H1 (cell line): ENCODE measurements at regions of chr17 and their contacts with region 1.

Region 1: DNA sequence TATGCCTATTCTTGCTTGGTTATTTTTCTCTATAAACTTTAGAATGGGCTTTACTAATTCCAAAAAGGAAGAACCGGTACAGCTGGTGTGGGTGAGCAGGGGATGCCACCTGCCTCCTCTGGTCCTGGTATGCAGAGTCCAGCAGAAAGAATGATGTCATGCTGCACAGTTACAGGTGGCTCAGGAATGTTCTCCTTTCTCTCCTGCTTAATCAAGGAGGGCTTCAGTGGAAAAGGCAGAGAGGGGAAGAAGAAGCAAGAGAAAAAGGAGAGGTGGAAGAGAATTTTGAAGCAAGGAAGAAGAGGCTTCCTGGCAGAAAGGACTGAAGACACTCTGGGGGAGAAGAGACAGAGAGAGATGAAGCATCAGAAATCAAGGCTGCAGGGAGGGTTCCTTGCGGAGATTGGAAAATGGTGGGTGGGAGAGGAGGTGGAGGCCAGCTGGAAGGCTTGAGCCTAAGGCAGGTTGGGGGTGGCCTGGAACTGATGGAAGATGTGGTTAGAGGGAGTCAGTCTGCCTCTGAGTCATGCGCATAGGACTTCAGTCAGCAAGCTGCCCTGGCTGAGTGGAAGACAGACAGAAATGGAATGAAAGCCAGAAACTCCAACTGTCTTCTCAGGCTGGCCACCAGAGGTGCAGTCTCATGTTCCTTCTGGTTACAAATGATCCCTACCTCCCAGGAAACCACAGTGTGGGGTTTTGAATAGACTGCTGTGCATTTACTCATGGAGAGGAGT is 64.6 kb upstream of the CRHR1 start:
- DNase-seq: no peak
- H3K4me3 ChIP-seq: no peak overlapping the region
- H3K27ac ChIP-seq: no peak overlapping the region
- H3K4me1 ChIP-seq: peaks cover 0 to 5% (median 1%) of the 10 kb centered on the region in 4 experiments; a peak in 1 of 7 replicates
- H3K27me3 ChIP-seq: no peaks in the 10 kb centered on the region
- CTCF ChIP-seq: peak; percentile 29 to 69 (median 54)
- EP300 ChIP-seq: no peak
- POLR2A ChIP-seq: no peak
- RAD21 ChIP-seq: peak; percentile 26 to 46; a peak in 3 of 4 replicates

Region 2: GRCh38 chr17:45666046-45666600 is 53.4 kb before region 1 on chr17:
- CTCF ChIA-PET with region 1: interaction called, 22 read pairs
- POLR2A ChIA-PET with region 1: no interaction called
- DNase-seq: no peak
- H3K4me3 ChIP-seq: no peak overlapping the region
- H3K27ac ChIP-seq: no peak overlapping the region
- H3K4me1 ChIP-seq: no peaks in the 10 kb centered on the region
- H3K27me3 ChIP-seq: no peaks in the 10 kb centered on the region; a peak in 3 of 7 replicates
- CTCF ChIP-seq: peak; percentile 54 to 65 (median 54)
- EP300 ChIP-seq: no peak
- POLR2A ChIP-seq: no peak
- RAD21 ChIP-seq: peak; percentile 78

Region 3: DNA sequence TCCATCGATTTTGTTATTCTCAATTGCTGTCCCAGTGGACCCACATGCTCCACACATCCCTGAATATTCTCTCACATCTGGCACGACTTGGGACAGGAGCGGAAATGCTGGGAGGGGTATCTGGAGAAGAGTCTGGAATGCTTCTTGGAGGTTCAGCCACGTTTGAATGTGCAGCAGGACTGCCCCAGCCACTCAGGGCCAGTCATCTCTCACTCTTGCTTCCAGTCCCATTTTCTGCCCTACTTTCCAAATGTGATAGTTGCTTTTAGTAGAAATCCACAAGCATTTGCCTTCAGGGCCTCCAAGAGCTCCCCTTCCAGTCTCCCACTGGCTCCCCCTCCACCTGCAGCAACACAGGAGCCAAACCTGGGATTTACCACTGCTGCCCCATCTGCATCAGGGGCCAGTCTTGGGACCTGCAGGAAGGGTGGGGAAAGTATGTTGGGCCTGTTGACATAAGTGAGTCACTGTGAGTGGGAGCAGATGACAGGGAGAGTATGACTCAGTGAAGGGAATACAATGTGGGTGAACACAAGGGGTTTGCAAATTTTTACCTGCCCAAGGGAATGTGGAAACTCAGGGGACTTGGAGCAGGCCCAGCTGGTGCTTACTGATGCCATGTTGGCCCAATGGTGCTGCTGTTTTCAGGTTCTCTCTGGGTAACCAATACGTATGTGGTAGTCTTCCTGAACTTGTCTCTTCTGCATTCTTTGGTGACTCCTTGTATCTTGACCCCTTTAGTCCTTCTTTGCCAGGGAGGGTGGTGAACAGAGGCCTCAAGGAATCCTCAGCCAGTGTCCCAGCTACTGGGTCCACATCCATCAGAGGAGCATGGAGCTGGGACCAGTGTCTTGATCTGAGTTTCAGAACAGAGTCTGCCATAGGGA is 14.1 kb before region 1 on chr17:
- CTCF ChIA-PET with region 1: interaction called, 35 read pairs
- POLR2A ChIA-PET with region 1: no interaction called
- DNase-seq: no peak
- H3K4me3 ChIP-seq: no peak overlapping the region
- H3K27ac ChIP-seq: no peak overlapping the region
- H3K4me1 ChIP-seq: peaks cover 0 to 18% (median 8%) of the 10 kb centered on the region in 4 experiments; a peak in 6 of 7 replicates
- H3K27me3 ChIP-seq: peaks cover 0 to 2% (median 0%) of the 10 kb centered on the region in 4 experiments; a peak in 2 of 7 replicates
- CTCF ChIP-seq: no peak
- EP300 ChIP-seq: no peak
- POLR2A ChIP-seq: no peak
- RAD21 ChIP-seq: no peak

Region 4: GRCh38 chr17:45768000-45768399 is 48.5 kb after region 1 on chr17:
- CTCF ChIA-PET with region 1: interaction called, 26 read pairs
- POLR2A ChIA-PET with region 1: no interaction called
- DNase-seq: no peak
- H3K4me3 ChIP-seq: no peak overlapping the region
- H3K27ac ChIP-seq: no peak overlapping the region
- H3K4me1 ChIP-seq: peaks cover 9 to 17% (median 13%) of the 10 kb centered on the region in 4 experiments
- H3K27me3 ChIP-seq: no peaks in the 10 kb centered on the region
- CTCF ChIP-seq: peak; percentile 40 to 54 (median 41)
- EP300 ChIP-seq: no peak
- POLR2A ChIP-seq: no peak
- RAD21 ChIP-seq: peak; percentile 30 to 50; a peak in 3 of 4 replicates

Region 5: GRCh38 chr17:45828628-45829027 is 109.1 kb after region 1 on chr17:
- CTCF ChIA-PET with region 1: interaction called, 37 read pairs
- POLR2A ChIA-PET with region 1: no interaction called
- DNase-seq: no peak
- H3K4me3 ChIP-seq: no peak overlapping the region
- H3K27ac ChIP-seq: no peak overlapping the region
- H3K4me1 ChIP-seq: peaks cover 0 to 2% (median 0%) of the 10 kb centered on the region in 4 experiments; a peak in 1 of 7 replicates
- H3K27me3 ChIP-seq: no peaks in the 10 kb centered on the region; a peak in 1 of 7 replicates
- CTCF ChIP-seq: no peak
- EP300 ChIP-seq: no peak
- POLR2A ChIP-seq: no peak
- RAD21 ChIP-seq: peak in 1 of 2 experiments; percentile 22; a peak in 1 of 4 replicates